ENCODE measurements at regions of chr3 and their contacts with region 1.

Region 1: GRCh38 chr3:59857589-59858346 is 807.9 kb upstream of the CFAP20DC start:
- DNase-seq: peak; percentile 80
- ATAC-seq: peak; percentile 95
- H3K4me3 Mint-ChIP-seq: no peak overlapping the region
- H3K27ac Mint-ChIP-seq: no peak overlapping the region
- H3K4me1 Mint-ChIP-seq: peaks cover 5% of the 10 kb centered on the region
- H3K27me3 Mint-ChIP-seq: no peaks in the 10 kb centered on the region
- CTCF ChIP-seq: peak; percentile 69

Region 2: DNA sequence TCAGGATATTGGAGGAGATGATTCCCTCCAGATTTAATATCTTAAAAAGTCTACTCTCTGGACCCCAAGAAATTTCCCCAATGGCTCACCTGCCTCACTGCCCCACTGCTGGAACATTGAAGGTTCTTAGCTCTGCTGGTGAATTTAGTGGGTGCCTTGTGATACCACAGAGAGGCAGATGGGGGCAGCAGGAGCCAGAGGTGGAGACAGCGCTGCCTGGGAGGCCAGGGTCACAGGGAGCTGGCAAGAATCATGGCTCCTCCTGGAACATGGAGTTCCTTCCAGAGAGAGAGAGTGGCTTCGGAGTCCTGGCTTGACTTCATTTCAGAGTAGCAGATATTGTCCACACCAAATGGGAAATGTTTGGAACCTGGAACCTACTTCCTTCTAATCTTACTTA is 544.4 kb before region 1 on chr3:
- CTCF ChIA-PET with region 1: interaction called, 16 read pairs
- POLR2A ChIA-PET with region 1: no interaction called
- DNase-seq: peak; percentile 68
- ATAC-seq: peak; percentile 95
- H3K4me3 Mint-ChIP-seq: no peak overlapping the region
- H3K27ac Mint-ChIP-seq: no peak overlapping the region
- H3K4me1 Mint-ChIP-seq: no peaks in the 10 kb centered on the region
- H3K27me3 Mint-ChIP-seq: no peaks in the 10 kb centered on the region
- CTCF ChIP-seq: 0 out of 2 replicates have a peak, but pooled peaks have one; percentile 24

Region 3: DNA sequence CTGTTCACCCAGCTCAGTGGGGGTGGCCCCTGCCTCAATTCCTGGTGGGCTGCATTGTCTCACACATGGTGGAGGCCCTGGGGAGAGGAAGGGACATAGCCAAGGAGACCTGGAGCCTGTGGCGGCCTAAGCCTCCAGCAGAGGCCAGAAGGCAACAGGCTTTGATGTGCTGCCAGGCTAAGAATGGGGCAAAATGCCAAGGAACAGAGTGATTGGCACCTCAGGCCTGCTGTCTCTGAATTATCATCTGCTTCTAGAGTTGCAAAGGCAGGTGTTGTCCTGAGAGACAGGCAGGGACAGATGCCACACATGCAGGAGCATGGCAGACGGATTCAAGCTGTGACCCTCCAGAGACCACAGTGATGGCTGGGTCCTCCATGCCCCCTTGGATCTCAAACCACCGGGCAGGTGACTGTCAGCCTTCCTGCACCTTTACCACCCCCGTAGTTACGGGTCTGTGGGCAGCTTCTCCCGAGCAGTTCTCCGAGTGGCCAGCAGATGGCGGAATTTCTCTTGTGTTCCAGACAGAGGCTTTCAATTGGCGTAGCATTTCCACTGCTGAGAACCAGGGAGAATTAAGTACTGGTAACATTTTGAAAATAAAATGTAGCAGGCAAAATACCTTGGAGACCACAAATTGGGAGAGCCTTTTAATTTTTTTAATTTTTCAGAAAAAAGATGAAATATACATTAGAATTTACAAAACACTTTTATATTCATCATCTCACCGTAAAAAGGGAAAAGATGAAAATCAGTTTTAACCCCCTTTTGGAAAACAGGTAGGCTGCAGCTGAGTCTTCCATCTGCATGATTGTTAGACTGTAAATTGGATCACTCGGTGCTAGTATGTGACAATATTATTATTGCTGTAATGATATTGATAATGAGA is 282.4 kb before region 1 on chr3:
- CTCF ChIA-PET with region 1: interaction called, 47 read pairs
- POLR2A ChIA-PET with region 1: no interaction called
- DNase-seq: peak; percentile 92
- ATAC-seq: peak; percentile 90
- H3K4me3 Mint-ChIP-seq: no peak overlapping the region
- H3K27ac Mint-ChIP-seq: no peak overlapping the region
- H3K4me1 Mint-ChIP-seq: no peaks in the 10 kb centered on the region
- H3K27me3 Mint-ChIP-seq: no peaks in the 10 kb centered on the region
- CTCF ChIP-seq: peak; percentile 90

Region 4: DNA sequence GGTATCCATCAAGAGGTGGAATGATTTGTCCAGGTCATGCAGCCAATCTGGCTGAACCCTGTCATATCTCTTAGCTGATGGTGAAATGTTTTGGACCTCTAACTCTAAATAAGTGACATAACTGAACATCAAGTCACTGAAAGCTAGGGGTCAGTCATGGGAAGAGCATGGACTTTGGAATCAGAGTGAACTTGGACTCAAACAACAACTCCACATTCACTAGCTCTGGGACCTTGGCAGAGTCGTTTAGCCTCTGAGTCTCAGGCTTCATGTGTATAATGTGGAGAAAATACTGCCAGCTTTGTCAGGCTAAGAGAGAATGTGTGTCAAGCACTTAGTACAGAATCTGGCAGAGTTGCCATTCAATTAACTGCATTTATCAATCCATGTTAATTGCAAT is 250.1 kb before region 1 on chr3:
- CTCF ChIA-PET with region 1: interaction called, 28 read pairs
- POLR2A ChIA-PET with region 1: no interaction called
- DNase-seq: no peak
- ATAC-seq: no peak
- H3K4me3 Mint-ChIP-seq: no peak overlapping the region
- H3K27ac Mint-ChIP-seq: no peak overlapping the region
- H3K4me1 Mint-ChIP-seq: 0 out of 2 replicates have a peak, but pooled peaks cover 3% of the 10 kb centered on the region
- H3K27me3 Mint-ChIP-seq: no peaks in the 10 kb centered on the region
- CTCF ChIP-seq: no peak

Region 5: GRCh38 chr3:59771768-59772181 is 86.0 kb before region 1 on chr3:
- CTCF ChIA-PET with region 1: interaction called, 11 read pairs
- POLR2A ChIA-PET with region 1: no interaction called
- DNase-seq: no peak
- ATAC-seq: no peak
- H3K4me3 Mint-ChIP-seq: no peak overlapping the region
- H3K27ac Mint-ChIP-seq: no peak overlapping the region
- H3K4me1 Mint-ChIP-seq: peaks cover 17% of the 10 kb centered on the region
- H3K27me3 Mint-ChIP-seq: no peaks in the 10 kb centered on the region
- CTCF ChIP-seq: no peak

Region 6: GRCh38 chr3:59809710-59810444 is 47.9 kb before region 1 on chr3:
- CTCF ChIA-PET with region 1: interaction called, 12 read pairs
- POLR2A ChIA-PET with region 1: no interaction called
- DNase-seq: no peak
- ATAC-seq: peak; percentile 55
- H3K4me3 Mint-ChIP-seq: no peak overlapping the region
- H3K27ac Mint-ChIP-seq: no peak overlapping the region
- H3K4me1 Mint-ChIP-seq: peaks cover 49% of the 10 kb centered on the region
- H3K27me3 Mint-ChIP-seq: peaks cover 66% of the 10 kb centered on the region
- CTCF ChIP-seq: no peak; the same call in 1 of the 2 replicates